ENCODE measurements at regions of chr6 and their contacts with region 1.

Region 1: GRCh38 chr6:33156561-33156960 is 35.7 kb downstream of the COL11A2 start:
- DNase-seq: no peak
- H3K4me3 ChIP-seq: no peak overlapping the region
- H3K27ac ChIP-seq: no peak overlapping the region
- H3K4me1 ChIP-seq: peaks cover under 1% of the 10 kb centered on the region
- H3K27me3 ChIP-seq: no peaks in the 10 kb centered on the region
- CTCF ChIP-seq: no peak

Region 2: DNA sequence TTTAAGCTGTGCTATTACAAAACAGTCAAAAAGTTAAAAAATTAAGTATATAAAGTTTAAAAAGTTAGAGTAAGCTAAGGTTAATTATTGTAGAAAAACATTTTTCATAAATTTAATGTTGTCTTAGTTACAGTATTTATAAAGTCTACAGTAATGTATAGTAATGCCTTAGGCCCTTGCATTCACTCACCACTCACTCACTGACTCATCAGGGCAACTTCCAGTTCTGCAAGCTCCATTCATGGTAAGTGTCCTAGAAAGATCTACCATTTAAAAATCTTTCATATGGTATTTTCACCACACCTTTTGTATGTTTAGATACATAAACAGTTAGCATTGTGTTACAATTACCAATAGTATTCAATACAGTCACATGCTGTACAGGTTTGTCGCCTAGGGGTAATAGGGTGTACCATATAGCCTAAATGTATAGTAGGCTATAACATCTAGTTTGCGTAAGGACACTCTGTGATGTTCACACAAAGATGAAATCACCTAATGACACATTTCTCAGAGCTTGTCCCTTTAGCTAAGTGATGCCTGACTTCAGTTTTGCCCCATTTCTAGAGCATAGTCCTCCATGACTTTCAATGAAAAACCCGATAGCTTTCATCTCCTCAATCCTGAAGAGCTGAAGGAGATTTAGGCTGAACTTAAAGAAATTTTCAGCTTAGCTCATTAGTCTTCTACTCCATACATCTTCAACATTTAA is 731.8 kb before region 1 on chr6:
- CTCF ChIA-PET with region 1: no interaction called
- dilution Hi-C with region 1: no loop called
- in situ Hi-C with region 1: no loop called
- intact Hi-C with region 1: loop called (anchors 5 kb)
- DNase-seq: peak; percentile 62
- H3K4me3 ChIP-seq: no peak overlapping the region
- H3K27ac ChIP-seq: no peak overlapping the region
- H3K4me1 ChIP-seq: peaks cover 4% of the 10 kb centered on the region
- H3K27me3 ChIP-seq: peaks cover 3% of the 10 kb centered on the region
- CTCF ChIP-seq: no peak

Region 3: GRCh38 chr6:32868257-32868788 is 288.2 kb before region 1 on chr6:
- CTCF ChIA-PET with region 1: no interaction called
- dilution Hi-C with region 1: no loop called
- in situ Hi-C with region 1: no loop called
- intact Hi-C with region 1: no loop called
- DNase-seq: peak; percentile 54
- H3K4me3 ChIP-seq: no peak overlapping the region
- H3K27ac ChIP-seq: no peak overlapping the region
- H3K4me1 ChIP-seq: no peaks in the 10 kb centered on the region
- H3K27me3 ChIP-seq: peaks cover 2% of the 10 kb centered on the region
- CTCF ChIP-seq: peak; percentile 71 to 83

Region 4: DNA sequence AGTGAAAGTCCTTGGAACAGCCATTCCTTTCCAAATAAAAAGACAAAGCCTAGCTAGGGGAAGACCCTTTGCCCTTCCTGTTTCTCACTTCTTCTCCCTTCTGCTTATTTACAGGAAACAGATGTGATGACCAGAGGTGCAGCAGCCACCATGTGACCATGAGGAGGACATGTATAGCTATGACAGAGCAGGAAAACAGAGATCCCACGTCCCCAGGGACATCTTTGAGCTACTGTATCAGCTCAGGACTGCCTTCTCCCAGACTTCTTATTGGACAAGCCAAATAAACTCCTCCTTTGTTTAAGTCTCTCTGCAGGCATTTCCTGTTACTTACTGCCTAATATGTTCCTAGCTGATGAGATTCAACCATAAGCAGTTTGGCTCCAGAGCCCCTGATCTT is 780.3 kb after region 1 on chr6:
- CTCF ChIA-PET with region 1: no interaction called
- dilution Hi-C with region 1: no loop called
- in situ Hi-C with region 1: no loop called
- intact Hi-C with region 1: no loop called
- DNase-seq: no peak
- H3K4me3 ChIP-seq: no peak overlapping the region
- H3K27ac ChIP-seq: no peak overlapping the region
- H3K4me1 ChIP-seq: no peaks in the 10 kb centered on the region
- H3K27me3 ChIP-seq: peaks cover 4% of the 10 kb centered on the region
- CTCF ChIP-seq: no peak